ENCODE measurements at regions of chr7 and their contacts with region 1.

Region 1: DNA sequence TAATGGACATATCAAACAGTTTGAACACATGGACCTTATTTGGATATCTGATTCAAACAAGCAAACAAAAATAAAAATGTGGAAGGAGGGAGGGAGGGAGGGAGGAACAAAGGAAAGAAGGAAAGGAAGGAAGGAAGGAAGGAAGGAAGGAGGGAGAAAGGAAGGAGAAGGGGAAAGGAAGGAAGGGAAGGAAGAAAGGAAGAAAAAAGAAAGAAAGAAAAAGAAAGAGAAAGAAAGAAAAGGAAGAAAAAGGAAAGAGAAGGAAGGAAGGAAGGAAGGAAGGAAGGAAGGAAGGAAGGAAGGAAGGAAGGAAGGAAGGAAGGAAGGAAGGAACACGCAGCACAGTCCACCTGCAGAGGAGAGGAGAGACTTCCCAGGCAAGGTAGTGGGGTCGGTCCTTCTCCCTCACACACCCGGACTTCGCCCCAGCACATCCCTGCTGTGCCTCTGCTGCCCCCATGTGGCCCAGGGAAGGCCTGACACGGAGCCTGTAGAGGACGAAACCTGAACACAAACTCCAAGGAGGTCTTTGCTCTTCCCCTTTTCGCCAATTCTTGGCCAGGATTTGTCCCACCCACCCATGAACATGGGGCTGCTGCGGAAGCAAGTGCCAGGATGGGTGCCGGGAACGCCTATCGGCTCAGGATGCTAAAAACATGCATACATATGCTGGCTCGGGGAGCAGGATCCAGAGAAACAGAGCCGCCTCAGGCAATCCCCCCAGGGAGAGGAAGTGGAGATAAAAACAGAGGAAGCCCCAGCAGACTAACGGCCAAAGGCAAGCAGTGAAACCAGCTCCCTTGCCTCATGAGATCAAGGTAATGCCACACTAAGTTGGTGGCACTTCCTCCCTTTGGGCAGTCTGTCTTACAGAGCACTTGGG is 52.3 kb upstream of the DGKI start:
- DNase-seq: peak; percentile 59
- H3K4me3 Mint-ChIP-seq: no peak overlapping the region
- H3K27ac Mint-ChIP-seq: peak overlapping the region; percentile 64
- H3K4me1 Mint-ChIP-seq: peaks cover 30% of the 10 kb centered on the region
- H3K27me3 Mint-ChIP-seq: no peaks in the 10 kb centered on the region

Region 2: DNA sequence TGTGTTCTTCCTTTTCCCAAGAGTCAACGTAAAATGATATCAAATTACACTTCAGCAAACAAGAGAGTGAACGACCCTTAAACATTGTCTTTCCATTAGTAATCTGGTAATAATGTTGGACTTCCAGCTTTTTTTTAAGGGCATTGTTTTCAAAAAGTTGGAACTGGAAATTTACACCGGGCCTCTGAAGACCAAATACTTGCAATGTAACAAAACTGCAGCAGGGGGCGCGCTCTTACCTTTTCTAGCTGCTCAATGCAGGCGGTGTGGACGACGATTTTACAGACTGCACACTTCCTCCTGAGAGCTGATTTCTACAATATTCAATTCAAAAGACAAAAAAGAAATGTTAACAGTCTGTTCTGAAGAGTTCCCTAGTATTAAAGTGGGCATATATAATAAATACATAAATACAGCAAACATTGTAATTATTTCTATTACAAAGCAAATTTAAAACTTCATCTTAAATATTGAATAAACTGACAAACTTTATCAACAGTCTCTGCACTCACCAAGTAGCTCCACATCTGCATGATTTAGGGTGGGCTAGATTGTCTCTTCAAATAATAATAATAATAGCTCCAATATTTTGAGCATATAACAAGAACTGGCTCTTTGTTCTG is 242.7 kb before region 1 on chr7:
- intact Hi-C with region 1: loop called (anchors 1 kb)
- DNase-seq: peak; percentile 34
- H3K4me3 Mint-ChIP-seq: no peak overlapping the region
- H3K27ac Mint-ChIP-seq: no peak overlapping the region
- H3K4me1 Mint-ChIP-seq: no peaks in the 10 kb centered on the region
- H3K27me3 Mint-ChIP-seq: peaks cover 4% of the 10 kb centered on the region

Region 3: GRCh38 chr7:137804836-137805235 is 94.2 kb before region 1 on chr7:
- intact Hi-C with region 1: no loop called
- DNase-seq: no peak
- H3K4me3 Mint-ChIP-seq: no peak overlapping the region
- H3K27ac Mint-ChIP-seq: no peak overlapping the region
- H3K4me1 Mint-ChIP-seq: no peaks in the 10 kb centered on the region
- H3K27me3 Mint-ChIP-seq: peaks cover 3% of the 10 kb centered on the region

Region 4: GRCh38 chr7:137873989-137874777 is 24.9 kb before region 1 on chr7:
- intact Hi-C with region 1: loop called (anchors 2 kb)
- DNase-seq: no peak
- H3K4me3 Mint-ChIP-seq: no peak overlapping the region
- H3K27ac Mint-ChIP-seq: peak overlapping the region; percentile 68
- H3K4me1 Mint-ChIP-seq: peaks cover 21% of the 10 kb centered on the region
- H3K27me3 Mint-ChIP-seq: no peaks in the 10 kb centered on the region

Region 5: DNA sequence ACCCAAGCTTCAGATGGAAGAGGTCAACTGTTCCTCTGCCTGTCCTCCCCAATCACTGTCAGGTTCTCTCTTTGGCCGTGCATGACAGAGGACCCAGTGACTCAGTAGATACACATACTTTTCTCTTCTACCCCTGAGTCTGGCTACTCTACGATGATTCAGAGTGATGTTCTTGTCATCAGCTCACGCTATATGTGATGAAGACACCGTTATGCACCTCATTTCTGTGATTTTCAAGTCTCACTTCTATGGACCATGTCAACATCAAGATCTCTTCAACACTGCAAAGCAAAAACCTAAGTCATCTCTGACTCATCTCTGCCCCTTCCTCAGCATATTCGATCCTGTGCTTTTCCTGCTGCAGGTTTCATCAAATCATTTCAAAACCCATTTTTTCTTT is 24.3 kb after region 1 on chr7:
- intact Hi-C with region 1: loop called (anchors 2 kb)
- DNase-seq: no peak
- H3K4me3 Mint-ChIP-seq: no peak overlapping the region
- H3K27ac Mint-ChIP-seq: peak overlapping the region; percentile 10
- H3K4me1 Mint-ChIP-seq: peaks cover 33% of the 10 kb centered on the region
- H3K27me3 Mint-ChIP-seq: no peaks in the 10 kb centered on the region

Region 6: GRCh38 chr7:137934941-137935883 is 36.1 kb after region 1 on chr7:
- intact Hi-C with region 1: no loop called
- DNase-seq: no peak
- H3K4me3 Mint-ChIP-seq: peak overlapping the region; percentile 78
- H3K27ac Mint-ChIP-seq: peak overlapping the region; percentile 79
- H3K4me1 Mint-ChIP-seq: peaks cover 39% of the 10 kb centered on the region
- H3K27me3 Mint-ChIP-seq: no peaks in the 10 kb centered on the region

Region 7: GRCh38 chr7:137961200-137962177 is 62.4 kb after region 1 on chr7:
- intact Hi-C with region 1: no loop called
- DNase-seq: no peak
- H3K4me3 Mint-ChIP-seq: no peak overlapping the region
- H3K27ac Mint-ChIP-seq: peak overlapping the region; percentile 38
- H3K4me1 Mint-ChIP-seq: peaks cover 28% of the 10 kb centered on the region
- H3K27me3 Mint-ChIP-seq: no peaks in the 10 kb centered on the region

Region 8: DNA sequence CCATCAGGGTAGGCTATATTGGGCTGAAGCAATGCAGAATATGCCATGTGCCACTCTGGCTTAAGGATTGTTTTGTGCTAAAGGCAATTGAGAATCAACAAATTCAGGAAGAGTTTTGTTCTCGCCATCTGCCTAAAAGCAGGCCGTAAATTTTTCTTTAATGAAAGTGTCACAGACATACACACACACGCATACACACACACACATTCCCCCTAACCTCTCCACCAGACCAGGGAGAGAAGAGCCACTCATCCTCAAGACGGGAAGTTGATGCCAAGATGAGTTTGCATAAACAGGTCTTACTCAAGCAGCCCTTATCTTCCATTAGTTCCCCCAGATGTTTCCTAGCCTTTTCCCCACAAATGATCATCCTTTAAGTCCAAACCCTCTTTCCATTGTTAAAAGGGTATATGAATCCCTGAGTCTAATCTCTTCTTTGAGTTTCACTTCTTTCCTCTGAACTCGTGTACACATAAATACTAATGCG is 501.4 kb after region 1 on chr7:
- intact Hi-C with region 1: no loop called
- DNase-seq: no peak
- H3K4me3 Mint-ChIP-seq: no peak overlapping the region
- H3K27ac Mint-ChIP-seq: no peak overlapping the region
- H3K4me1 Mint-ChIP-seq: no peaks in the 10 kb centered on the region
- H3K27me3 Mint-ChIP-seq: no peaks in the 10 kb centered on the region

Region 9: DNA sequence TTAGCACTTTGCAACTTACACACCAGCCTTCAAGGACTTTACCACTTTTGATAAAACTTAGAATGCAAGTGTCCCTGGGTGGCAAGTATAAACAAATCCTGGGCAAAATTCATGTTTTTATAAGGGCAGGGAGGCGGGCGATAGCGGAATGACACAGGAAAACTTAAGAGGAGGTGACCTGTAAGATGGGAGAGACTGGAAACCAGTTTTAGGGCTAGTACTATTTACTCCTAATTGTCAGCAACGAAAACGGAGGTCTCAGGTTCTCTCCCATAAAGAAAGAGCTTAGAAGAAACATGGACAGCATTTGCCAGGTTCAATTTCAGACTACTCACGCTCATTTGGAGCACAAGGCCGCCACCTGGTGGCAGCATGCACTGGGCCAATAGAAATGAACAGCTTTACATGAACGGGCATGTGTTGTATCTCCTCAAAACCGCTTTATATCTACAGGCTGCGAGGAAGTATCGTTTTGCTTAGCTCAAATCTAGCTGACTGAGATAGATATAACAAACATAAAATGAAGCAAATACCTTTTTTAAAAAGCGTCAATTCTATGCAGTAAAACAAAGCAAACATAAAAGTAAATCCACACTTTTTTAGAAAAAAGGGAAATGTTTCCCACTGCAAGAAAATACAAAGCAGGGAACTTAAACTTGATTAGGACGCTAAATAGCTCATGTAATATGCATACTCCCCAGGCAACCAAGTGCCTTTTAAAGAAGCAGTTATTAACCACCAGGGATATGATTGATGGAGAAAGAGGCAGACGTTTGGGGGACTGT is 839.7 kb after region 1 on chr7:
- intact Hi-C with region 1: loop called (anchors 10 kb)
- DNase-seq: peak; percentile 69
- H3K4me3 Mint-ChIP-seq: no peak overlapping the region
- H3K27ac Mint-ChIP-seq: no peak overlapping the region
- H3K4me1 Mint-ChIP-seq: peaks cover 2% of the 10 kb centered on the region
- H3K27me3 Mint-ChIP-seq: peaks cover 5% of the 10 kb centered on the region

Measured in activated T-helper 2 cell treated with anti-CD3 and anti-CD28 coated beads, Interferon-gamma antibody, Interleukin-2, Interleukin-4, amounts not matched to agents 10 μg/mL and 5 μg/mL and 100 μg/mL, durations not matched to agents 14 hours and 24 hours and 36 hours (primary cell).